ENCODE measurements at regions of chr1 and their contacts with region 1.

Region 1: GRCh38 chr1:183567584-183567983 is 22.7 kb downstream of the NCF2 start:
- DNase-seq: peak; percentile 57
- CTCF ChIP-seq: no peak

Region 2: GRCh38 chr1:183281553-183282091 is 286.0 kb before region 1 on chr1:
- in situ Hi-C with region 1: loop called (anchors 25 kb)
- DNase-seq: peak; percentile 83
- CTCF ChIP-seq: peak; percentile 82

Region 3: GRCh38 chr1:183783767-183784637 is 216.4 kb after region 1 on chr1:
- in situ Hi-C with region 1: no loop called
- DNase-seq: no peak
- CTCF ChIP-seq: no peak

Region 4: DNA sequence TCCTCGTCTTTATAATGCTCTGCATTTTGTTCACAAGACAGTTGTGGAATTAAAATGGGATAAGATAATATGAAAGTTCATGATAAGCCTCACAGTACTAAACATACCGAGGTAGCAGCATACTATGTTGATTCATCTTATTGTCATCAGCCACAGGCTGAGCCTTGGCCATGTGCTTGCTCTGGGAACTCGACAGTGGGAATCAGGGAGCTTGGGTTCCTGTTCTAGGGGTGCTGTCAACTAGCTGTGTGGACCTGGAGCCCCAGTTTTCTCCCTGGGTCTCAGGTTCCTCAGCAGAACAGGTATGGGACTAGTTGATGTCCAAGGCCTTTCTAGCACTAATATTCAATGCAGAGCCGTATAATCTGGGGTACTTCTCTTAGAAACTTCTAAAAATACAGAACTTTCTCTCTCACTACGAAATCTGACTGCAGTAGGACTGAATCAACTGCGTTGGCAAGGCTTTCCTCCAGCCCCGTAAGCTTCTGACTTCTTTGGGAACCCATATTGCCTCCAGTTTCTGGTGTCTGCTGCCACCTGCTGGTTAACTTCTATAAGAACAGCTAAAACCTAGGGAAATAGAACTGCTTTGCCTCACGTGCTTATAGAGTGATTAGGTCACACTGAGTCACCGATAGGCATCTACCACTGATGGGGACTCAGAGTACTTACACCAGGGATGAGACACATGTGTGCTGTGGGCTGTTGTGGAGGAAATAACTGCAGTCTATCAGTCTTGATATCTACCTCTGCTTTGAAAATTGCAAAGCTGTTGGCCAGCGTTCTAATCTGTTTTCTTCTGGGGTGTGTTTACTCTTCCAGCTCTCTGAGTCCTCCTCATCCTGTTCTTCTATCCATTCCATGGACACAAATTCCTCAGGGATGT is 348.3 kb after region 1 on chr1:
- in situ Hi-C with region 1: no loop called
- DNase-seq: peak; percentile 61
- CTCF ChIP-seq: peak; percentile 58

Measured in GM13976 (cell line).